ENCODE measurements at regions of chr9 and their contacts with region 1.

Region 1: DNA sequence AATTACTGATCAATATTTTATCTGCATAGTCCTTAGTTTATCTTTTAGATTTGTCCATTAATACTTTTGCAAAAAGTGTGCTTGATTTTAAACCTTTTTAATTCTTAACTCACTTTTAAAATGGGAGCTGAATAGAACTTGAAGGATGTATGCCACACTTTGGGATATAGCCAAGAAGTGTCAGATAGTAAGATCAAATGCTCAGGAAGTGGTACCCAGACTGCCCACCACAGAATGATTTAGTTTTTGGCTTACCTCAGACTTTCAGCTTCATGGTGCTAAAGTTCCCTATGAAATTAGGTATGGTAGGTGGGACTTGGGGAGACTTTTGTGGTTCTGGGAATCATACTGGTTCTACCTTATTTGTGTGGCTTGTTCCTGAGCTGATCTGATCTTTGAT is 14.7 kb downstream of the FOCAD start:
- DNase-seq: no peak
- ATAC-seq: no peak
- H3K4me3 ChIP-seq: no peak overlapping the region
- H3K27ac ChIP-seq: no peak overlapping the region
- H3K4me1 ChIP-seq: peaks cover 27% of the 10 kb centered on the region
- H3K27me3 ChIP-seq: no peaks in the 10 kb centered on the region
- CTCF ChIP-seq: no peak

Region 2: DNA sequence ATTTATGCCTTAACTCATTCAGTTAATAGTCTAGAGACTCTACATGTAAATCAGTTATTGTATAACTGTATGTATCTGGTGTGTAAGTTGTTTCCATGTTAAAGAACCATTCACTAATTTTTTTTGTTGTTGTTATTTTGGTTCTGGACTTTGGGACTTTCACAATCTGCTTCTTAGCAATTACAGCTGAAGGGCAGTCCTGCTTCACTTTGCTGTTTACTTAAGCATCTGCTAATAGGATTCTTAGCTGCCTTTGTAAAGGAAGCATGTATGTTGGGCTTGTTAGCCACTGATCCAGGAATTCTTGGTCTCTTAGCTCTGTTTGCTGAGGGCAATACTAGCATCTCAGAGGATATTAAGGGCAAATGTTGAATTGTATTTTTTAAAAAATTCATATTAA is 82.3 kb after region 1 on chr9:
- intact Hi-C with region 1: loop called in 1 of 2 experiments (anchors 5 kb)
- DNase-seq: no peak
- ATAC-seq: no peak
- H3K4me3 ChIP-seq: no peak overlapping the region
- H3K27ac ChIP-seq: no peak overlapping the region
- H3K4me1 ChIP-seq: no peaks in the 10 kb centered on the region
- H3K27me3 ChIP-seq: no peaks in the 10 kb centered on the region
- CTCF ChIP-seq: no peak